Activated T-helper 1 cell treated with anti-CD3 and anti-CD28 coated beads, Interleukin-12 subunit alpha, Interleukin-12 subunit beta, Interleukin-2, Interleukin-4 antibody, amounts not matched to agents 30 ng/mL and 10 ng/mL and 1 ng/mL, durations not matched to agents 14 hours and 24 hours and 36 hours (primary cell): ENCODE measurements at regions of chr3 and their contacts with region 1.

Region 1: GRCh38 chr3:45224824-45225464 is 1.1 kb downstream of the TMEM158 start:
- DNase-seq: peak; percentile 4
- H3K4me3 Mint-ChIP-seq: peak overlapping the region; percentile 79
- H3K27ac Mint-ChIP-seq: peak overlapping the region; percentile 80
- H3K4me1 Mint-ChIP-seq: peaks cover 17% of the 10 kb centered on the region
- H3K27me3 Mint-ChIP-seq: peaks cover 75% of the 10 kb centered on the region

Region 2: GRCh38 chr3:45008117-45008516 is 216.8 kb before region 1 on chr3:
- intact Hi-C with region 1: no loop called
- DNase-seq: no peak
- H3K4me3 Mint-ChIP-seq: no peak overlapping the region
- H3K27ac Mint-ChIP-seq: no peak overlapping the region
- H3K4me1 Mint-ChIP-seq: peaks cover 17% of the 10 kb centered on the region
- H3K27me3 Mint-ChIP-seq: no peaks in the 10 kb centered on the region

Region 3: GRCh38 chr3:45210308-45211041 is 14.5 kb before region 1 on chr3:
- intact Hi-C with region 1: loop called (anchors 1 kb)
- DNase-seq: peak; percentile 67
- H3K4me3 Mint-ChIP-seq: no peak overlapping the region
- H3K27ac Mint-ChIP-seq: no peak overlapping the region
- H3K4me1 Mint-ChIP-seq: peaks cover 14% of the 10 kb centered on the region
- H3K27me3 Mint-ChIP-seq: peaks cover 29% of the 10 kb centered on the region

Region 4: DNA sequence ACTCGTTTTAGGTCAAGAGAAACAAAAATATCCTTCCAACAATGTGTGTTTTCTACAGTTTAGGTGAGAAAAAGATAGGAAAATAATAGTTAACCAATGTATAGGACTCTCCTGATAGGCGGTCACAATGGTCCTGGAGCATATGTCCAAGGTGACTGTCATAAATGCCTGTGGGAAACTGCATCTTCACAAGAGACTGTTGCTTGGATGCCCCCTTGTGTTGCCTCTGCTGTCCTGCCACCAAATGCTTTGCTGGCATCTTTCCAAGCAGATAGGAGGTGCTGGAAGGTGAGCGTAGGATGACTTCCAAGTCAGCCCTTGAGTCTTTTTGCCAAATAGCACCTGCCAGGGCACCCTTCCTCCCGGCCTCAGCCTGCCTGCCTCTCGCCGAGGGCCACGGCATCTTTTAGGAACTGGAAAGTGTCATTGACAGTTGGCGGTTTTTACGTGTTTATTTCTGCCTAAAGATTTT is 440.2 kb after region 1 on chr3:
- intact Hi-C with region 1: loop called (anchors 5 kb)
- DNase-seq: peak; percentile 34
- H3K4me3 Mint-ChIP-seq: peak overlapping the region; percentile 83
- H3K27ac Mint-ChIP-seq: peak overlapping the region; percentile 86
- H3K4me1 Mint-ChIP-seq: peaks cover 53% of the 10 kb centered on the region
- H3K27me3 Mint-ChIP-seq: no peaks in the 10 kb centered on the region